AG04450 (cell line): ENCODE measurements at regions of chr10 and their contacts with region 1.

Region 1: GRCh38 chr10:73644015-73644743 is 2.9 kb upstream of the MYOZ1 start:
- DNase-seq: no peak
- H3K4me3 ChIP-seq: no peak overlapping the region
- H3K27ac ChIP-seq: no peak overlapping the region
- H3K27me3 ChIP-seq: peaks cover 4% of the 10 kb centered on the region
- CTCF ChIP-seq: peak; percentile 81

Region 2: DNA sequence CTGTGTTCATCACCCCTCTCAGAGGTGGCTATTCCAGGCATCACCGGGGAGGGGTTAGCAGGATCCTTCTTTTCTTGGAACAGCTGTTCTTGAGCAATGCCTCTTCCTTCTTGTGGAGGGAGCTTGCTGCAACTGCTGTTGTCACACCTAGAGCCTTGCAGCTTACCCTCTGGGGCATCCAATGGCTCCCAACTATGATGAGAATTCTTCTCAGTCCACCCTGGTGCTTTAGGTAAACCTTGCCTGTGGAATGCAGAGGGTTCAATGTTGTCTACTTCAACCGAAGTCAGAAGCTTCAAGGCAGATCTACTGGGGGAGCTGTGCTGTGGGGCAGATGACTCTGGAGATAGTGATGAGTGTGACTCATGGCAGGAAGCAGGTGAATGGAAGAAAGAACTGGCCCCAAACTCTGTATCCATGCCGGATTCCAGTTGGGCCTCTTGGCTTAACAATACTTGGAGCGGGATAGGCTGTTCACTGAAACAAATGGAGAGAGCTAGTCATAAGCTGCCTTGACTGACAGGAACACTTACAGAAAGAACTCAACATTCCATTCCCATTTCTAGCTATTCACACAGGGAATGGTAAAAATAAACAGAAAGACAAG is 126.8 kb before region 1 on chr10:
- CTCF ChIA-PET with region 1: interaction called, 11 read pairs
- POLR2A ChIA-PET with region 1: no interaction called
- DNase-seq: no peak
- H3K4me3 ChIP-seq: no peak overlapping the region
- H3K27ac ChIP-seq: no peak overlapping the region
- H3K27me3 ChIP-seq: no peaks in the 10 kb centered on the region
- CTCF ChIP-seq: no peak

Region 3: DNA sequence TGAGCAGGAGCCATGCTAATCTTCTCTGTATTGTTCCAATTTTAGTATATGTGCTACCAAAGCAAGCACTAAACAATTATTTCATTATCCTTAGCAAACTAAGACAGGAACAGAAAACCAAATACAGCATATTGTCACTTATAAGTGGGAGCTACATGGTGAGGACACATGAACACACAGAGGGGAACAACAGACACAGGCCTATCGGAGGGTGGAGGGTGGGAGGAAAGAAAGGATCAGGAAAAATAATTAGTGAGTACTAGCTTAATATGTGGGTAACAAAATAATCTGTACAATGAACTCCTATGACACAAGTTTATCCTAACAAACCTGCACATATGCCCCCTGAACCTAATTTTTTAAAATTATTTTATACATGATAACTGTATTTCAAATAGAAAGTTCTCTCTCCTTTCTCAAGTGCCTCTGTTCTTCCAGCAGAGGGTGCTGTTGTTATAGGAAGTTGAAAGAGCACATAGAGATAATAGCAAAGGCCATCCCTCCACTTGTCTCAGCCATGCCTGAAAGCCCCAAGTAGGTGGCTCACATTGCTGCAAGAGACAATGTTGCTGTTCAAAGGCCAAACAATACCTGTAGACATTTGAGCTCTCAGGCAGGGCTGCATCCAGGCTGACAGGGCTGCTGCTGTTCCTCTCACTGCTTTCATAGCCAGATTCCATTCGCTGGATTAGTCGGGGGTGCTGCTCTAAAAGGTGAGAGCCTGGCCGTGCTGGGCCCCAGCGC is 114.9 kb before region 1 on chr10:
- CTCF ChIA-PET with region 1: interaction called, 284 read pairs
- POLR2A ChIA-PET with region 1: no interaction called
- DNase-seq: peak; percentile 45
- H3K4me3 ChIP-seq: no peak overlapping the region
- H3K27ac ChIP-seq: no peak overlapping the region
- H3K27me3 ChIP-seq: no peaks in the 10 kb centered on the region
- CTCF ChIP-seq: peak; percentile 83

Region 4: GRCh38 chr10:73537288-73537687 is 106.9 kb before region 1 on chr10:
- CTCF ChIA-PET with region 1: interaction called, 284 read pairs
- POLR2A ChIA-PET with region 1: no interaction called
- DNase-seq: no peak
- H3K4me3 ChIP-seq: no peak overlapping the region
- H3K27ac ChIP-seq: no peak overlapping the region
- H3K27me3 ChIP-seq: no peaks in the 10 kb centered on the region
- CTCF ChIP-seq: no peak

Region 5: DNA sequence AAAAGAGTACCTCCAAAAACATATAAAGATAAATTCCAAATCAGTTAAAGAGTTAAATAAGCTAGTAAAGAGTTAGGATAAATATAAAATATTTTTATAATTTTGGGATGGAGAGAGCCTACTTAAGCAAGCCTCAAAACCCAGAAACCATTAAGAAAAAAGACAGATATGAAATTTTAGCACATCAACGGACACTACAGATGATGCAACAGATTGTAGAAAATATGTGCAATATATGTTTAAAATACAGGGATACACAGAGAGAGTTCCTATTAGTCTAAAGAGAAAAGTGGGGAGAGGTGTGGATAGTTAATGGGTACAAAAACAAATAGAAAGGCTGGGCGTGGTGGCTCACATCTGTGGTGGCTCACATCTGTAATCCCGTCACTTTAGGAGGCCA is 29.5 kb before region 1 on chr10:
- CTCF ChIA-PET with region 1: interaction called, 20 read pairs
- POLR2A ChIA-PET with region 1: no interaction called
- DNase-seq: no peak
- H3K4me3 ChIP-seq: no peak overlapping the region
- H3K27ac ChIP-seq: no peak overlapping the region
- H3K27me3 ChIP-seq: no peaks in the 10 kb centered on the region
- CTCF ChIP-seq: no peak

Region 6: DNA sequence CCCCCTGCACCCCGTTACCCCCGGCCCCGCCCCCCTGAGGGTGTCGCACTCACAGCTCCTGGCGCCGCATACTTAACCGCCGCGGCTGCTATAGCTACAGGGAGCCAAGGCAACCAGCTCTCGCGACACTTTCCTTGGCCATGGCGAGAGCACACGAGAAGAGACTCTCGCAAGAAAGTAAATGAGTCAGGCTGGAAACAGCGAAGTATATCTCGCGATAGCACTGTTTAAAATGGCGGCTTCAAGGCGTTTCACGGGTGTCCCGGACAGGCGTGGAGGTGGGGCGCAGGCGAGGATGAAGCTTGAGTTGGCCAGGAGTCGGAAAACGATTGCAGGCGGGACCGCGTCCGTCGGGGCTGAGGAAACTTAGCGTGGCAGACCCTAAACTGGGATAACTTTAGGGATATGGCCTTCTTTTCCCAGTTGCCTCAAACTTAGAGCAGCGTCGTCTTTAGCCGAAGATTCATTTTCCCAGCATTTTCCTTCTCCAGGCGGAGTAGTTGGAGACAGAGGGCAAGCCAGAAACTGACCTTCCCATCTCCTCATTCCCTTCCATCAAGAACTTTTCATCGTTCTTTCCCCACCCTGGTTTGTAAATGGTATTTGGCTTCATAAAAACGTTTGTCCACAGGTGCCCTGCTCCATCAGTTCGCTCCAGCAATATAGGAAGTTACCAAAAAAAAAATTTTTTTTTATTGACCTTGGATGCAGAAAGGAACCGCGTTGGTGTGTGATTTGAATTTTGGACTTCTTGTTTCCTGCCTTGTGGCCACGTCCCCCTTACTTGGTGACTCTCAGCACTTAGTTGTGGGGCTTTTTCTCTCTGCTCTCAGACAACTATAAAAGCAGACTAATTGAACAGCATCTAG is 18.1 kb before region 1 on chr10:
- CTCF ChIA-PET with region 1: interaction called, 23 read pairs
- POLR2A ChIA-PET with region 1: interaction called, 3 read pairs
- DNase-seq: peak; percentile 94
- H3K4me3 ChIP-seq: peak overlapping the region; percentile 95
- H3K27ac ChIP-seq: peak overlapping the region; percentile 85
- H3K27me3 ChIP-seq: no peaks in the 10 kb centered on the region
- CTCF ChIP-seq: no peak